Lower lobe of right lung (tissue), 2 donors: ENCODE measurements at regions of chr6 and their contacts with region 1.

Region 1: DNA sequence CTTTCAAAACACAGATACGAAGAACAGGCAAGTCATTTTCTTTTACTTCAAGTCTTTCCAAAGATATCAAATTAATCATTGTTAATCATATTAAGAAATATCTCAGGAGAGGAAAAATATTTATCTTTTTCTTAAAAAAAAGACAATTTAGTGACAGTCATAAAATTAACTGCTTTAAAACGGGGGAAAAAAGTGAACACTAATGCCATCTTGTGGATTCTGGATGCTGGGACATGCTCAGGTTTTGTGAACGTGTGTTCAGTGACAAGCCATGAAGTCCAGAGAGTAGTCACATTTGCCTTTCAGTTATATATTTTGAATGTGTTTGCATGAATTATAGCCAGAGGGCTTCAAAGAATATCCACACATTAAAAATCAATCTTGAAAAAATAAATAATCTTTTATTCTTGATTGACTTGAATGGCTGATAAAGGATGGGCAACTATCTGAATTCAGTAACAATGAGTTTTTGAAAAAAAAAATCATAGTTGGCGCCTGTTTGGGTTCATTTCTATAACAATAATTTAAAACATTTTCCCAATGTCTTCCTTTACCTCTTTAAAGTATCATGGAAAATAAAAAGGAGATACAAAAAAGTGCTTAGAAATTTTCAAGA is 74.7 kb upstream of the NOX3 start:
- DNase-seq: no peak
- ATAC-seq: peak in 1 of 2 donors; percentile 58
- H3K4me3 ChIP-seq: no peak overlapping the region
- H3K27ac ChIP-seq: no peak overlapping the region
- H3K4me1 ChIP-seq: peaks cover 21% of the 10 kb centered on the region
- H3K27me3 ChIP-seq: no peaks in the 10 kb centered on the region
- CTCF ChIP-seq: peak; percentile 65

Region 2: DNA sequence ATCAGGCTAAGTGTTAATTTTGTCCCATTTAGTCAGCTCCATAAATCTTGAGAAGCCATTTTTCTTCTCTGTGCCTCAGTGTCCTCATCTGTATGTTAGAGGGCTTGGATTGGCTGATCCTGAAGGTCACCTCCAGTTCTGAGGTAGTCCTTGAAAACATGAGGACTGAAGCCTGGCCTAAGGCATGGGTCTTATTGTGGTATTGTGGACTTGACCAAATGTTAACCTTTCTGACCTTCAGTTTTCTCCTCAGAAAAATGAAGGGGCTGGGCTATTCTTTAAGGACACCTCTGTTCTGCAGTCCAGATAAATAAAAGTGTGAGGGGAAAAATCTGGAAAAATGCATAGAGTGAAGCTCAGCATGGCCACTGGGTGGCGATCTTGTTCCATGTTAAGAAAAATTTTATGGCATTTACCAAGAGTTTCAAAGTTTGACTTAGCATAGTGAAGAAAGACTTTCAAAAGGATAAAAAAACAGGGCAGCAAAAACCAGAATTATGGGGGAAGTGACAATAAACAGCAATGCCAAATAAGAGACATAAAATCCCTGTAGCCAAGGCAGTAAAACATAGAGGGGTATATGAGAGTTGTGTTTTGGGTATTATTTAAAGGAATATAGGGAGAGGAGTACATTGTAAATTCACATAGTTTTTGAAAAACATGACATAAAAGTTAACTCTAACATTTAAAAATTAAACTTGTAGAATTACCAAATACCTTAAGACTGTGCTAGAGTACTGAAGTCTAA is 202.8 kb before region 1 on chr6:
- intact Hi-C with region 1: loop called (anchors 5 kb)
- DNase-seq: peak; percentile 52
- ATAC-seq: peak; percentile 74 to 81
- H3K4me3 ChIP-seq: no peak overlapping the region
- H3K27ac ChIP-seq: no peak overlapping the region
- H3K4me1 ChIP-seq: peaks cover 5% of the 10 kb centered on the region
- H3K27me3 ChIP-seq: no peaks in the 10 kb centered on the region
- CTCF ChIP-seq: peak; percentile 81